Activated CD4-positive, alpha-beta T cell treated with anti-CD3 and anti-CD28 coated beads for 36 hours (primary cell): ENCODE measurements at regions of chr6 and their contacts with region 1.

Region 1: DNA sequence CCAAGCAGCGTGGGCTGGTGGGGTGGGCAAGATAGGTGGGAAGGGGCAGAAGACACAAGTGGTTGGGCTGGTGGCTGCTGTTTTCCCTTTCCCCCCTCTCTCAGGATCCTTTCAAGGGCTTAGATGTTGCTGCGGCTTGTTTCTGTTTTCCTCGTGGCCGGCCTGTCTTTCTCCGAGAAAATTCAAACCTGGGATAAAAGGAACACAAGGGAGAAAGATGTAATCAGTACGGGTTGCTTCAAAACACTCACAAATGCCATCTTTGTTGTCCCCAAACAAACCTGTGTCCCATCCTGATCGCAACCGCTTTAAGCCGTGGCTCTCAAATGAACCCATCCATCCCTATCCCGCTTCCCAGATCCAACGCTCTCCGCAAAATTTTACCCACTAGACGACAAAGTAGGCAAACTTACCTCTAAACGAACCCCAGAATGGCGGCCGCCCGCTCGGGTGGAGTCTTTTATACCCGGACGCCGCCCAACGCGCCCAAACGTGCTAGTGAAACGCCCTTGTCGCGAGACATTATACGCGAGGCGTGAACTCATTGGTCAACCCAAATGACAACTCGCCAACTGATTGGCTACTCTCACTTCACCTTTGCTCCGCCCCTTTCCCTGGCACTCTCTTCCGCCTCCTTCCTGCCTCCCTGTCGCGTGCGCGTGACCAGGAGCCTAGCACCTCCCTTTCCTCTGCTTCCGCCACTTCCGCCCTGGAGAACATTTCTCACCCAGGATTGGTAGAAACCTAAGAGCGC is at the start of gene PPP1R10:
- DNase-seq: peak; percentile 99
- ATAC-seq: peak; percentile 77
- H3K4me3 Mint-ChIP-seq: peak within 1 kb of the TSS; percentile 97
- H3K27ac Mint-ChIP-seq: peak within 1 kb of the TSS; percentile 98
- H3K4me1 Mint-ChIP-seq: peaks cover 40% of the 10 kb centered on the region
- H3K27me3 Mint-ChIP-seq: no peaks in the 10 kb centered on the region
- total RNA-seq, gene PPP1R10: 75.6 to 100.0 TPM

Region 2: GRCh38 chr6:30515932-30516753 is 100.8 kb before region 1 on chr6:
- CTCF ChIA-PET with region 1: no interaction called
- POLR2A ChIA-PET with region 1: interaction called, 3 read pairs
- intact Hi-C with region 1: loop called in 1 of 2 experiments (anchors 1 kb)
- DNase-seq: peak; percentile 96
- ATAC-seq: peak; percentile 87
- H3K4me3 Mint-ChIP-seq: peak overlapping the region; percentile 74
- H3K27ac Mint-ChIP-seq: peak overlapping the region; percentile 98
- H3K4me1 Mint-ChIP-seq: peaks cover 69% of the 10 kb centered on the region
- H3K27me3 Mint-ChIP-seq: no peaks in the 10 kb centered on the region

Region 3: GRCh38 chr6:30600451-30600961 is 16.5 kb before region 1 on chr6:
- CTCF ChIA-PET with region 1: interaction called, 39 read pairs
- POLR2A ChIA-PET with region 1: interaction called, 13 read pairs
- intact Hi-C with region 1: loop called in 1 of 2 experiments (anchors 2 kb)
- DNase-seq: no peak
- ATAC-seq: no peak
- H3K4me3 Mint-ChIP-seq: no peak overlapping the region
- H3K27ac Mint-ChIP-seq: no peak overlapping the region
- H3K4me1 Mint-ChIP-seq: peaks cover 17% of the 10 kb centered on the region
- H3K27me3 Mint-ChIP-seq: no peaks in the 10 kb centered on the region

Region 4: DNA sequence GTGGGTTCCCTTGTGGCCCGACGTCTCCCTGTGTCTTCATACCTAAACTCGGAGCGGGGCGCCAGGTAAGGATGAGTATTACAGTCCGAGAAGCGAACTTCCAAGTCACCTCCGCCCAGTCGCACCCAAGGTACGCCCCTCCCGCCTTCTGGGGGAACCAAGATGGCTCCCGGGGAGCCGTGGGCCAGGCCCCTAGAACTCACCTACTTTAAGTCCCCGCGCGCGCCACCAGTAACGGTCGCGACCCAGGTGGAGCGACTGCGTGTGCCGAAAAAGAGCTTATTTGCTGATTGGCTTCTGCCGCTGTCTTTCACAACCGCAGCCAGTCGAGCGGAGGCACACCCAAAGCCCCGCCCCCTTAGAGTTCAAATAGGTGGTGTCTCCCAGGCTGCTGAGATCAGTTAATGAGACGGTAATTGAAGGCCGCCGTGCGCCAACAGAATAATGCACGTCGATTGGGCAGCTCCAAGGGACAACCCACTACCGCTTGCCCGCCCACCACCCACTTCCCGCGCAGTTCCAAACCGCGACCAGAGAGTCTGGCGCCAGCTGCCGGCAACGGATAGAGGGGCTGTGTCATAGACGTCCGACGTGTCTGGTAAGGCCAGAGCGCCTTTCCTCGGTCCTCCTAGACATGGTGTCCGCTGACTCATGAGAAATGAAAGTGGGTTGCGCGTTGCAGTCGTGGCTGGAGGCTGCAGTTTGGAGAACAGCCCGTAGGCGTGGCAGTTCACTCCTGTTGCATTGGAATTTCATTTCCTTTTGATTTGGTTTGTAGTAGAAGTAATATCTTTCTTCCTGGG is 100.3 kb after region 1 on chr6 and contains the start of gene MDC1:
- CTCF ChIA-PET with region 1: interaction called, 8 read pairs
- POLR2A ChIA-PET with region 1: interaction called, 20 read pairs
- intact Hi-C with region 1: loop called (anchors 1 kb)
- DNase-seq: peak; percentile 100
- ATAC-seq: peak; percentile 78
- H3K4me3 Mint-ChIP-seq: peak within 1 kb of the TSS; percentile 98
- H3K27ac Mint-ChIP-seq: peak within 1 kb of the TSS; percentile 99
- H3K4me1 Mint-ChIP-seq: peaks cover 43% of the 10 kb centered on the region
- H3K27me3 Mint-ChIP-seq: no peaks in the 10 kb centered on the region
- total RNA-seq, gene MDC1: 92.0 to 101 TPM

Region 5: DNA sequence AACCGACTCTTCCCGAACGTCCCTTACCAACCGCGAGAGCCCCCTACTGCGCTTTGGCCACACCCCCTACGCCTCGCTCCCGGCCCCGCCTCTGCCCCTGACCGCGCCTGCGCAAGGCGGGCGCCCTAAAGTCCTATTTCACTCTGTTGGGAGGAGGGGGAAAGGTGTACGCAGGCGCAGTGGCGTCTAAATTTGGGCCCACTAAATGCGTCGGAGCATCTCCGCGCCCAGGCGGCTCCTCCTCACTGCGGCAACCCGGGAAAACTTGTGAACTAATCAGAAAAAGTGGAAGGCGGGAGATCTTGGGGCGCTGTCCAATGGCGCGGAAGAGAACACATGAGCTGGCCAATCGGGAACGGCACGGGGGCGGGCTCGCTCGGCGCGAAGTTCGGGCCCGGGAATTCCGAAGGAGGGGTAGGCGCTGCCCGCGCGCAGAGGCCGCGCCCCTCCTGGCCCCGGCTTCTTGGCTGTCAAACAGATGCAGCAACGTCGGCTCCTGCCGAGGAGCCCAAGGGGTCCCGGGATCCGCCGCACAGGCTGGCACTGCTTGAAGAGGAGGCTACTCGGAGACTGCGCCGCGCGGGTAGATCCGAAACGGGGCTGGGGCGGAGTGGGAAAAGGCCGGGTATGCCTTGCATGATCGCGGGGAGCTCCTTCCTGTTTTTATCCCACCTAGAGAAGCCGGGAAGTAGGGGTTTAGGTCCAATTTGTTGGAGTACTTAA is 541.3 kb after region 1 on chr6 and contains the start of gene TCF19:
- CTCF ChIA-PET with region 1: no interaction called
- POLR2A ChIA-PET with region 1: no interaction called
- intact Hi-C with region 1: loop called in 1 of 2 experiments (anchors 1 kb)
- DNase-seq: peak; percentile 99
- ATAC-seq: peak; percentile 90
- H3K4me3 Mint-ChIP-seq: peak within 1 kb of the TSS; percentile 97
- H3K27ac Mint-ChIP-seq: peak within 1 kb of the TSS; percentile 89
- H3K4me1 Mint-ChIP-seq: peaks cover 39% of the 10 kb centered on the region
- H3K27me3 Mint-ChIP-seq: no peaks in the 10 kb centered on the region
- total RNA-seq, gene TCF19: 82.6 to 88.0 TPM

Region 6: DNA sequence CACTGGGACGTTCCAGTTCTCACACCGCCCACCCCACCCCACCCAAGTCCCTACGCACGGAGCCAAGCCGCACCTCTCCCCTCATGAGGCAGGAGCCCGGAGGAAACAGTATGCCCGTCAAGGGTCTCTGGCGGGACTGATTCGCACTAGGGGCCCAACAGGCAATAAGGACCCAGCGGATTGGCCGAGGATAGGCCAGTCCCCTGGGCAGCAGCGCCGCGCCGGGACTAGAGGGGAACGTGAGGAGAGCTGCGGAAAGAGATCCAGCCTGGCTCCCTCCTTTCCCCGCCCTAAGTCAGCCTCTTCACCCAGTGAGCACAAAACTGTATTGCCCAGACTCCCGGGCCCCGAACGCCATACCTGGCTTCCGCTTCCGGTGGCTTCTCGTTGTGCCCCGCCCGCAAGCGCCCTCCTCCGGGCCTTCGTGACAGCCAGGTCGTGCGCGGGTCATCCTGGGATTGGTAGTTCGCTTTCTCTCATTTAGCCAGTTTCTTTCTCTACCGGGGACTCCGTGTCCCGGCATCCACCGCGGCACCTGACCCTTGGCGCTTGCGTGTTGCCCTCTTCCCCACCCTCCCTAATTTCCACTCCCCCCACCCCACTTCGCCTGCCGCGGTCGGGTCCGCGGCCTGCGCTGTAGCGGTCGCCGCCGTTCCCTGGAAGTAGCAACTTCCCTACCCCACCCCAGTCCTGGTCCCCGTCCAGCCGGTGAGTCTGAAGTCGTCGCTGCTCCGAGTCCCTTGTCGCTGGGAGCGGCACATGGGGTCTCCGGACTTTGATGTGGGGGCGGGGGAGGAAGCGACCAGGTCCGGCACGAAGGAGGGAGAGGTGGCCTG is 1048.7 kb after region 1 on chr6 and contains the start of gene CSNK2B:
- CTCF ChIA-PET with region 1: no interaction called
- POLR2A ChIA-PET with region 1: interaction called, 4 read pairs
- intact Hi-C with region 1: loop called in 1 of 2 experiments (anchors 10 kb)
- DNase-seq: peak; percentile 99
- ATAC-seq: peak; percentile 89
- H3K4me3 Mint-ChIP-seq: peak within 1 kb of the TSS; percentile 99
- H3K27ac Mint-ChIP-seq: peak within 1 kb of the TSS; percentile 99
- H3K4me1 Mint-ChIP-seq: peaks cover 66% of the 10 kb centered on the region
- H3K27me3 Mint-ChIP-seq: no peaks in the 10 kb centered on the region
- total RNA-seq, gene CSNK2B: 239 to 346 TPM

Region 7: DNA sequence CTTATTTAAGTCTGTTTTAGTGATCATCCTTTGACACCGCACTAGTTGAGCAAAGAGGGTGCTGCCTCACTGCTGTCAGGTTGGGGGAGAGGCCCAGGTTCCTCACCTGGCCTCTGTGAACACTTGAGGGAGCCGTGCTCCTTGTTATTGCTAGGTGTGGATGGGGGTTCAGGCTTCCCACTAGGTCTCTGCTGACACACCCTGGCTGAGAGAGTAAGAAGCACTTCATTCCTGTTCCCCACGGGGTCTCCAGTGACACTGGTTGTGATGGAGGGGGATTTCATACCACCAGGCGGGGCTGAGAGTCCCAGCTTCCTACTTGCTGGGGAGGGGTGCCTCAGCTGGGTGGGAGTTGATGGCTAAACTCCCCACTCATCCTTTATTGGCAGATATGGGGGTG is 1617.9 kb after region 1 on chr6:
- CTCF ChIA-PET with region 1: no interaction called
- POLR2A ChIA-PET with region 1: no interaction called
- intact Hi-C with region 1: no loop called
- DNase-seq: peak; percentile 29
- ATAC-seq: peak; percentile 64
- H3K4me3 Mint-ChIP-seq: no peak overlapping the region
- H3K27ac Mint-ChIP-seq: no peak overlapping the region
- H3K4me1 Mint-ChIP-seq: peaks cover 5% of the 10 kb centered on the region
- H3K27me3 Mint-ChIP-seq: no peaks in the 10 kb centered on the region